ENCODE measurements at regions of chr10 and their contacts with region 1.

Region 1: GRCh38 chr10:61140765-61141392 is 196.9 kb upstream of the RHOBTB1 start:
- DNase-seq: peak; percentile 96
- ATAC-seq: peak; percentile 83
- H3K4me3 ChIP-seq: no peak overlapping the region
- H3K27ac ChIP-seq: no peak overlapping the region
- H3K4me1 ChIP-seq: peaks cover 11% of the 10 kb centered on the region
- H3K27me3 ChIP-seq: no peaks in the 10 kb centered on the region
- CTCF ChIP-seq: peak; percentile 99

Region 2: DNA sequence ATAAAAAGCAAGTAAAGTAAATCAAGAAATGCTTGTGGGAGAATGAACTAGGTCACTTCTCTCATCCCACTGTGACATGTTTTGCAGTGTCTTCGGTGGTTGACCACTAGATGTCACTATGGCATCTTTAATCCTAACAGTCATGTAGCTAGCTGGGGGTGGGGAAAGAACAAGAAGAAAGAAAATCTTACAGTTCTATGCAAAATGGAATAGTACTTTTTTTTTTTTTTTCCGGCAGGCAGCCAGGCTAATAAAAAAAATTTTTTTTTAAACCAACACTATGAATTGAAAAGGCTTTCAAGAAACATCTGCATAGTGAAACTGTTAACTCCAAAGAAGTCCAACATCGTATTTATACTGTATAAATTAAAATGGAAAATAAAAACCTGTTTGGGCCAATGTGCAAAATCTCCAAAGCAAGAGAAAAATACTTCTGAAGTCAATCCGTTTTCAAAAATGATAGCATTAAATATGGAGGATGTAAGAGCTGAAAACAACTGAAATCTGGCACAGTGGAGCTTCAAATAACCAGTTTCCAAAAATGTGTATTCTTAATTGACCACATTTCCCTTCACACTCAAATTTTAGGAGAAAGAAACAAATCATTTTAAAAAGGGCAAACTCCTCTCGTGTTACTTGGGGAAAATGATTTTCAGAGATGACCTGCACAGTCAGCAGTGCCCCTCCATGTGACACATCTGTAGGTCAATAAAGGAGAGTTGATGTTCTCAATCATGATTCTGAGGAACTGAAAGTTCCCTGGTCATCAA is 324.1 kb before region 1 on chr10:
- CTCF ChIA-PET with region 1: interaction called, 3 read pairs
- POLR2A ChIA-PET with region 1: no interaction called
- intact Hi-C with region 1: loop called (anchors 1 kb)
- DNase-seq: peak; percentile 97
- ATAC-seq: peak; percentile 93
- H3K4me3 ChIP-seq: no peak overlapping the region
- H3K27ac ChIP-seq: no peak overlapping the region
- H3K4me1 ChIP-seq: peaks cover 6% of the 10 kb centered on the region; the same call in 1 of the 2 replicates
- H3K27me3 ChIP-seq: no peaks in the 10 kb centered on the region
- CTCF ChIP-seq: peak; percentile 100

Region 3: DNA sequence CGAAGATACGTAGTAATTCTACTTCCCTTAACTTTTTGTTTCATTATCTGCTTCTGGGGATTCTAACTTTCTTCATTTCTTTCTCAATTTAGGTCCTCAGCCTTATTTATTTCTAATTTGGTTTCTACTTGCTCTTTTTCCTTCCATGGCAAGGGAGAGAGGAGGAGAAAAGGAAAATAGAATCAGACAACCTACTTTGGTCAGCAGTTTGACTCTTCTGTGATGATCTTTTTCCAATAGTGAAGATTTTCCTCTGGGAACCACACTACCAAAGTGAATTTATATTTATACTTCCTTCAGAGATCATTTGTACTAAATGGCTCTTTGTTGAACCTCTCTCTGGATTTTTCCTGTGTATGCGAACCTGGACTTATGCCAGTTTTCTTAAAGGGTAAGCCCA is 222.1 kb after region 1 on chr10:
- CTCF ChIA-PET with region 1: interaction called, 11 read pairs
- POLR2A ChIA-PET with region 1: no interaction called
- intact Hi-C with region 1: no loop called
- DNase-seq: no peak
- ATAC-seq: no peak
- H3K4me3 ChIP-seq: no peak overlapping the region
- H3K27ac ChIP-seq: no peak overlapping the region
- H3K4me1 ChIP-seq: peaks cover 13% of the 10 kb centered on the region
- H3K27me3 ChIP-seq: no peaks in the 10 kb centered on the region
- CTCF ChIP-seq: no peak

Region 4: DNA sequence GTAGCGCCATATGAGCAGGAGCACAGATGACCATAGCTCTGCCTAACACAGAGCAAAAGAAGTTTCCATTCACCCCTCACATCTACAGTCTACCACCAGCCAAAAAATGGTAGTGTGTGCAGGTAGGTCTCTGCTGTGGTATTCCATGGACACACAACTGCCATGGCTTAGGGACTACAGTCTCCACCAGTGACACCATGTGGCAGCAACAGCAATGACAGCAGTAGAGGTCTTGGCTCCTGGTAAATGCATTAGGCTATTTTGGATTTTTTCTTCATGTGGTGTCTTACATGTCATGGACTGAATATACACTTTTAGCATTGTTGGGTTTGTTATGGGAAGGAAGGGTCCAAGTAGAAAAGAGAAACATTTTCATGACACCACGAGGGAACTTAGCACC is 451.7 kb after region 1 on chr10:
- CTCF ChIA-PET with region 1: no interaction called
- POLR2A ChIA-PET with region 1: no interaction called
- intact Hi-C with region 1: loop called (anchors 5 kb)
- DNase-seq: peak; percentile 91
- ATAC-seq: peak; percentile 83
- H3K4me3 ChIP-seq: no peak overlapping the region
- H3K27ac ChIP-seq: no peak overlapping the region
- H3K4me1 ChIP-seq: peaks cover 18% of the 10 kb centered on the region
- H3K27me3 ChIP-seq: no peaks in the 10 kb centered on the region; the same call in 1 of the 2 replicates
- CTCF ChIP-seq: peak; percentile 100

Measured in PC-3 (cell line).